ENCODE measurements at regions of chr5 and their contacts with region 1.

Region 1: GRCh38 chr5:151252762-151253604 is at the start of gene GM2A:
- DNase-seq: peak; percentile 94 to 99 (median 97)
- ATAC-seq: peak; percentile 96 to 99 (median 97)
- H3K4me3 ChIP-seq: peak within 1 kb of the TSS; percentile 74 to 82
- H3K4me3 Mint-ChIP-seq: peak within 1 kb of the TSS; percentile 74 to 95 (median 90)
- H3K27ac ChIP-seq: peak within 1 kb of the TSS; percentile 62
- H3K27ac Mint-ChIP-seq: peak within 1 kb of the TSS; percentile 91 to 93
- H3K4me1 ChIP-seq: peaks cover 9 to 32% of the 10 kb centered on the region in 2 experiments
- H3K4me1 Mint-ChIP-seq: peaks cover 32 to 67% (median 48%) of the 10 kb centered on the region in 3 donors
- H3K27me3 ChIP-seq: no peaks in the 10 kb centered on the region
- H3K27me3 Mint-ChIP-seq: no peaks in the 10 kb centered on the region
- total RNA-seq, gene GM2A: 8.2 to 20.9 (median 11.5) TPM

Region 2: GRCh38 chr5:149517461-149518122 is 1735.4 kb before region 1 on chr5:
- CTCF ChIA-PET with region 1: interaction called in 1 of 2 experiments, 11 read pairs
- POLR2A ChIA-PET with region 1: no interaction called
- DNase-seq: no peak
- ATAC-seq: no peak
- H3K4me3 ChIP-seq: no peak overlapping the region
- H3K4me3 Mint-ChIP-seq: no peak overlapping the region
- H3K27ac ChIP-seq: no peak overlapping the region
- H3K27ac Mint-ChIP-seq: peak overlapping the region; percentile 19 to 46
- H3K4me1 ChIP-seq: peaks cover 10 to 11% of the 10 kb centered on the region in 2 experiments
- H3K4me1 Mint-ChIP-seq: peaks cover 69 to 83% (median 77%) of the 10 kb centered on the region in 3 donors
- H3K27me3 ChIP-seq: no peaks in the 10 kb centered on the region
- H3K27me3 Mint-ChIP-seq: no peaks in the 10 kb centered on the region

Region 3: DNA sequence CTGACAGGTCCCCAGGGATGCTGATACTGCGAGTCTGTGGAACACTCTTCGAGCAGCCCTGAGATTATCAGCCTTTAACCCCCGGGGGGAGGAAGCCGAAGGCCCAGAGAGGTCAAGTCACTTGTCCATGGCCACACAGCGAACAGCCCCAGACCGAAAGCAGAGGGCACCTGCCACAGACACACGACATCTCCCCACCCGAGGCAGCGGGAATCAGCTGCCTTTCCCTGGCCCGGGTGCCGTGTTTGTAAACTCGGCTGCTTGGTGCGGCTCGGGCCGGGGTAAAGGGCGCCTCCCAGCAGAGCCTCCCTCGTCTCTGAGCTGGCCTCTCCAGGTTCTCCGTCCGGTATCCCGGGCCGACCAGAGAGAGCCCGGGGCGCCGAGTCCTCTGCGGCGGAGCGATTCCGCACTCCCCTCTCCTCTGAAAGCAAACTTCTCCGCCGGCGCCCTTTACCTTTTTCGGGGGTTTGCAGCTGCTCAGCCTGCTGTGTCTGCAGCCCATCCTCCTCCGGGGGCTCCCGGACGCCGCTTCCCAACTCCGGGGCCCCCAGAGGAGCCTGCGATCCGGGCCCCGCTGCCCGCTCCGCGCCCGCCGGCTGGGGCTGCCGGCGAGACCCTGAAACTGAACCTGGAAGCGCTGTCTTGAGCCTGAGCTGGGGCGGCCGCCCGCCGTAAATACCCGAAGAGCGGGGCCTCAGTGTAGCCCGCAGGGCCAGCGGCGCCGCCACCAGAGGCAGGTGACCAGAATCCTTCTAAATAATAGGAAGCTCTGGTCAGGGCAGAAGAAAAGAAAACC is 29.3 kb before region 1 on chr5 and contains the start of gene CCDC69:
- CTCF ChIA-PET with region 1: interaction called, 3 to 11 read pairs
- POLR2A ChIA-PET with region 1: interaction called in 1 of 2 experiments, 11 read pairs
- DNase-seq: peak in 28 of 35 experiments; percentile 19 to 65 (median 38)
- ATAC-seq: peak; percentile 56 to 65 (median 62)
- H3K4me3 ChIP-seq: peak within 1 kb of the TSS; percentile 87 to 95
- H3K4me3 Mint-ChIP-seq: peak within 1 kb of the TSS; percentile 87 to 94 (median 88)
- H3K27ac ChIP-seq: peak within 1 kb of the TSS; percentile 94
- H3K27ac Mint-ChIP-seq: peak within 1 kb of the TSS; percentile 97 to 99
- H3K4me1 ChIP-seq: peaks cover 41 to 61% of the 10 kb centered on the region in 2 experiments
- H3K4me1 Mint-ChIP-seq: peaks cover 58 to 66% (median 59%) of the 10 kb centered on the region in 3 donors
- H3K27me3 ChIP-seq: no peaks in the 10 kb centered on the region
- H3K27me3 Mint-ChIP-seq: no peaks in the 10 kb centered on the region
- total RNA-seq, gene CCDC69: 86.3 to 112 (median 93.5) TPM

Region 4: DNA sequence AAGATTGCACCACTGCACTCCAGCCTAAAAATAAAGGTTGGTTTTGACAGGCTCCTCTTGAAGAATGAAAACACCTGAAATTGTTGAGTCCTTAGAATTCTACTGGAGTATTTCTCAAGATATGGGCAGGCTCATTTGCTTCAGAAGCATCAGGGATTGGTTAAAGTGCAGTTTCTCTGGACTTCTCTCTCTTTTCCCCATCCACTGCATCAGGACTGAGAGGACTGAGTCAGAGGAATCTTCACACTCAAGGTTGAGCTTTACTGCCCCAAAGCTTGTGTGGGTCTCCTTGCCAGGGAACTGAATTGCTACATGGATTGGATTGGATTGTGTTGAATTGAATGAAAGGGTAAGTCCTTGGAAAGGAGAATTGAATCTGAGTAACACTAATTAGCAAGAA is 21.6 kb before region 1 on chr5:
- CTCF ChIA-PET with region 1: no interaction called
- POLR2A ChIA-PET with region 1: interaction called in 1 of 2 experiments, 13 read pairs
- DNase-seq: no peak
- ATAC-seq: no peak
- H3K4me3 ChIP-seq: no peak overlapping the region
- H3K4me3 Mint-ChIP-seq: no peak overlapping the region
- H3K27ac ChIP-seq: no peak overlapping the region
- H3K27ac Mint-ChIP-seq: no peak overlapping the region
- H3K4me1 ChIP-seq: peaks cover 14 to 22% of the 10 kb centered on the region in 2 experiments
- H3K4me1 Mint-ChIP-seq: peaks cover 20 to 36% (median 21%) of the 10 kb centered on the region in 3 donors
- H3K27me3 ChIP-seq: no peaks in the 10 kb centered on the region
- H3K27me3 Mint-ChIP-seq: no peaks in the 10 kb centered on the region

Region 5: DNA sequence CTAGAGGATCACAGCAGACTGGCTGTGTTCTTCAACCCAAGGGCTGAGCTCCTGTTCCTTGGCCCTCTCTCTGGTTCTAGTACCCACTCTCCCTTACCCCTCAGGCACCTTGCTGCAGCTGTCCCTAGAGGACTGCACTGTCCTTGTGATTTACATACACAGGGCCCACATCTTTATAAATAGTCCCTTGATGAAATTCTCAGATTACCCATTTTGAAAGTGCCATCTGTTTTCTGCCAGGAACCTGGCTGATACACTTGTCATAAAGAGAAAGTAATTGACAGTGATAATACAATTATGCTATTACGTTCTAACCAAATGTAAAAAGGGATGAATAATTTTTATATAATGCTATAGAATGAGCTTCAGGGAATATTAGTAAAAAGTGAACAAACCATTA is 450.2 kb after region 1 on chr5:
- CTCF ChIA-PET with region 1: no interaction called
- POLR2A ChIA-PET with region 1: no interaction called
- DNase-seq: no peak
- ATAC-seq: no peak
- H3K4me3 ChIP-seq: no peak overlapping the region
- H3K4me3 Mint-ChIP-seq: no peak overlapping the region
- H3K27ac ChIP-seq: no peak overlapping the region
- H3K27ac Mint-ChIP-seq: no peak overlapping the region
- H3K4me1 ChIP-seq: no peaks in the 10 kb centered on the region
- H3K4me1 Mint-ChIP-seq: no peaks in the 10 kb centered on the region
- H3K27me3 ChIP-seq: no peaks in the 10 kb centered on the region
- H3K27me3 Mint-ChIP-seq: peaks cover 0 to 3% of the 10 kb centered on the region in 2 donors

Measured in T-cell (primary cell).